ENCODE measurements at regions of chr1 and their contacts with region 1.

Region 1: DNA sequence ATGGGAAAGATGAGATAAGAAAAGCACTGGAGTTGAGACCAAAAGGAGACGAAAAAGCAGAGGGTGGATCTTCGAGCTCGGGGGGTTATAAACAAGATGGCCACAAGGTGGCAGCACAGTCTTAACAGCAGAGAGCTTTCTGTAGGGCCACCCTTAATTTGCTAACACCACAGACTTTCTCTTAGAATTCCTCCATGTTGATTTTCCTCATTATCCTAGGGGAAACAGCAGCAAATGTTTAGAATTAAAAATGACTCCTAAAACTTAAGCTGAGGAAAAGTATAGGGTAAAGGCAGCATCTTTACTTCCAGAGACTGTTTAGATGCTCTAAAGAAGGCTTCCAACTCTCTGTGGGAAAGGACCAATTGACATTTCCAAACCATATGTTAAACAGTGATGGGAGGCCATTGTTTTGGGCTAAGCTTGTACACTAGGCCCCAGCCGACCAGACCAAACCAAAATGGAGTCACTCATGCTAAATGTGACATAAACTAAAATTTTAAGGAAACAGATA is 2.5 kb upstream of the APOBEC4 start:
- DNase-seq: peak; percentile 48 to 77 (median 63)
- H3K4me3 ChIP-seq: no peak overlapping the region
- H3K4me3 Mint-ChIP-seq: no peak overlapping the region
- H3K27ac ChIP-seq: no peak overlapping the region
- H3K27ac Mint-ChIP-seq: no peak overlapping the region
- H3K4me1 ChIP-seq: peaks cover 24% of the 10 kb centered on the region
- H3K4me1 Mint-ChIP-seq: peaks cover 20 to 36% (median 35%) of the 10 kb centered on the region in 3 donors
- H3K27me3 ChIP-seq: no peaks in the 10 kb centered on the region
- H3K27me3 Mint-ChIP-seq: peaks cover 0 to under 1% of the 10 kb centered on the region in 2 donors

Region 2: DNA sequence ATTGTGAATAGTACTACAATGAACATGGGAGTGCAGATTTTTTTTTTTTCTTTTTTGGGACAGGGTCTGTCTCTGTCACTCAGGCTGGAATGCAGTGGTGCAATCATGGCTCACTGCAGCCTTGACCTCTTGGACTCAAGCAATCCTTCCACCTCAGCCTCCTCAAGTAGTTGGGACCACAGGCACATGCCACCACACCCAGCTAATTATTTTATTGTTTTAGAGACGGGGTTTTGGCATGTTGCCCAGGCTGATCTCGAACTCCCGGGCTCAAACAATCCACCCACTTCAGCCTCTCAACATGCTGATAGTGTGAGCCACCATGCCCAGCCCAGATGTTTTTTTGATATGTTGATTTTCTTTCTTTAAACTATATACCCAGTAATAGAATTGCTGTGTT is 1148.0 kb before region 1 on chr1:
- CTCF ChIA-PET with region 1: no interaction called
- POLR2A ChIA-PET with region 1: no interaction called
- DNase-seq: no peak
- H3K4me3 ChIP-seq: no peak overlapping the region
- H3K4me3 Mint-ChIP-seq: no peak overlapping the region
- H3K27ac ChIP-seq: no peak overlapping the region
- H3K27ac Mint-ChIP-seq: no peak overlapping the region
- H3K4me1 ChIP-seq: no peaks in the 10 kb centered on the region
- H3K4me1 Mint-ChIP-seq: no peaks in the 10 kb centered on the region
- H3K27me3 ChIP-seq: no peaks in the 10 kb centered on the region
- H3K27me3 Mint-ChIP-seq: peaks cover 6 to 20% of the 10 kb centered on the region in 2 donors

Region 3: DNA sequence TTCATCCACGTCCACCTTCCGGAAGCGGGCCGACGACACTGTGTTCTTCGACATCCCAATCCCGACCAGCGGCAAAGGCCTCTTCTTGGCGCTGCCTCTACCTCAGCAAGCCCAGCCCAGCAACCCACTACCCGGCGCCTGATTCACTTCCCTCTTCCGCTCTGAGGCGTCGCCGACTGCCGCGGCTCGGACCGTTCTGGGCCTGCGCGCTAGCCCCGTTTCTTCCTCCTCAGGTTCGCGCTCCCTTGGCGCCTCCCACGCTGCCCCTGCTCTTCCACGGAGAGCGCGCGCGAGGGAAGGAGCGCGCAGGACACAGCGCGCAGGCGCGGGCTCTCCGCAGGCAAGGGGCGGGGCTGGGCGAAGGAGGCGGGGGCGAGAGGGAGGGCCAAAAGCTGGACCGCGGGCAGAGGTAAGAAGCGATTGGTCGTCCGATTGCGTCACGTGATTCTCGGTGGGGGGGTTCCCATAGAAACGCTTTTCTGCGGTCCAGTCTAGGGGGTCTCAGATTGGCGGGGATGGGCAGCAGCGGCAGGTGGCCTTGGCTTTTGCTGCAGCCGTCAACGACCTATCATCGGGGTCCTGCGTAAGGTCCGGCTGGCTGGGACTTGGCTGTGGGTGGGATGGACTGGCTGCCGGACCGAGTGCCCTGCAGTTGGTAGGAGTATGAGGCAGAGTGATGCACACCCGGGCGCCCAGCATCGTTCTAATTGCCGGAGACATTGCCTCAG is 19.8 kb before region 1 on chr1 and contains the start of gene ARPC5:
- CTCF ChIA-PET with region 1: interaction called, 10 read pairs
- POLR2A ChIA-PET with region 1: interaction called, 3 read pairs
- DNase-seq: peak; percentile 90 to 96 (median 94)
- H3K4me3 ChIP-seq: peak within 1 kb of the TSS; percentile 84
- H3K4me3 Mint-ChIP-seq: peak within 1 kb of the TSS; percentile 100
- H3K27ac ChIP-seq: peak within 1 kb of the TSS; percentile 71
- H3K27ac Mint-ChIP-seq: peak within 1 kb of the TSS; percentile 92 to 100 (median 100)
- H3K4me1 ChIP-seq: peaks cover 30% of the 10 kb centered on the region
- H3K4me1 Mint-ChIP-seq: peaks cover 42 to 60% (median 55%) of the 10 kb centered on the region in 3 donors
- H3K27me3 ChIP-seq: no peaks in the 10 kb centered on the region
- H3K27me3 Mint-ChIP-seq: peaks cover 0 to 2% of the 10 kb centered on the region in 2 donors
- total RNA-seq, gene ARPC5: 142 to 146 TPM

Region 4: GRCh38 chr1:183685112-183685713 is 29.6 kb after region 1 on chr1:
- CTCF ChIA-PET with region 1: interaction called, 21 read pairs
- POLR2A ChIA-PET with region 1: no interaction called
- DNase-seq: peak in 2 of 5 donors; percentile 28 to 39
- H3K4me3 ChIP-seq: no peak overlapping the region
- H3K4me3 Mint-ChIP-seq: no peak overlapping the region
- H3K27ac ChIP-seq: no peak overlapping the region
- H3K27ac Mint-ChIP-seq: no peak overlapping the region
- H3K4me1 ChIP-seq: no peaks in the 10 kb centered on the region
- H3K4me1 Mint-ChIP-seq: peaks cover 0 to 3% (median 0%) of the 10 kb centered on the region in 3 donors
- H3K27me3 ChIP-seq: no peaks in the 10 kb centered on the region
- H3K27me3 Mint-ChIP-seq: peaks cover 20 to 41% of the 10 kb centered on the region in 2 donors